GM12878 (cell line): ENCODE measurements at regions of chr5 and their contacts with region 1.

Region 1: GRCh38 chr5:6188344-6188743 is 190.0 kb downstream of the MED10 start:
- DNase-seq: peak; percentile 55
- ATAC-seq: peak; percentile 98
- H3K4me3 ChIP-seq: peak overlapping the region; percentile 37; the same call in 1 of the 2 replicates
- H3K27ac ChIP-seq: peak overlapping the region; percentile 43
- H3K4me1 ChIP-seq: peaks cover 18% of the 10 kb centered on the region
- H3K27me3 ChIP-seq: no peaks in the 10 kb centered on the region
- CTCF ChIP-seq: no peak
- EP300 ChIP-seq: peak; percentile 44 to 69; a peak in 2 of 4 replicates
- POLR2A ChIP-seq: no peak
- RAD21 ChIP-seq: no peak

Region 2: GRCh38 chr5:6069496-6070185 is 118.7 kb before region 1 on chr5:
- CTCF ChIA-PET with region 1: no interaction called
- POLR2A ChIA-PET with region 1: no interaction called
- RAD21 ChIA-PET with region 1: no interaction called
- SMC1A ChIA-PET with region 1: no interaction called
- in situ Hi-C with region 1: no loop called
- intact Hi-C with region 1: no loop called
- DNase-seq: no peak
- ATAC-seq: no peak
- H3K4me3 ChIP-seq: no peak overlapping the region
- H3K27ac ChIP-seq: no peak overlapping the region
- H3K4me1 ChIP-seq: no peaks in the 10 kb centered on the region
- H3K27me3 ChIP-seq: no peaks in the 10 kb centered on the region
- CTCF ChIP-seq: no peak
- EP300 ChIP-seq: no peak
- POLR2A ChIP-seq: no peak
- RAD21 ChIP-seq: no peak

Region 3: DNA sequence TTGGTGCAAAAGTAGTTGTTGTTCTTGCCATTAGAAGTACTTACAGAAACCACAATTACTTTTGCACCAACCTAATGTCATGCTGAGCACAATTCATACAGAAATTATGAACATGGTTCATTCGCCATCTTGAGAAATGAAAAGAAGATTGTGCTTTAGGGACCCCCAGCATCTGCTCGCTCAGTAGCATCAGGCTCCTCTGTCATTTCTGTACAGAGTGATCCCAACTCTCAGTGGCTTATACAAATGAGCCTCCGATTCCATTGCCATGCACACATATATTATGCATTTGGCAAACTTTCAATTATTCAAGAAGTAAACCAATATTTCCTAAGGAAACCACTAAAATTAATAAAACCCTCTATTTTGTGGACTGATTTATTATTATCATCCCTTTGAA is 76.2 kb before region 1 on chr5:
- CTCF ChIA-PET with region 1: interaction called, 3 read pairs
- POLR2A ChIA-PET with region 1: no interaction called
- RAD21 ChIA-PET with region 1: interaction called, 3 read pairs
- SMC1A ChIA-PET with region 1: interaction called, 3 read pairs
- in situ Hi-C with region 1: no loop called
- intact Hi-C with region 1: loop called (anchors 5 kb)
- DNase-seq: no peak
- ATAC-seq: no peak
- H3K4me3 ChIP-seq: no peak overlapping the region
- H3K27ac ChIP-seq: no peak overlapping the region
- H3K4me1 ChIP-seq: no peaks in the 10 kb centered on the region
- H3K27me3 ChIP-seq: no peaks in the 10 kb centered on the region
- CTCF ChIP-seq: no peak
- EP300 ChIP-seq: no peak
- POLR2A ChIP-seq: no peak
- RAD21 ChIP-seq: no peak

Region 4: GRCh38 chr5:6176102-6176693 is 12.1 kb before region 1 on chr5:
- CTCF ChIA-PET with region 1: interaction called, 10 read pairs
- POLR2A ChIA-PET with region 1: no interaction called
- RAD21 ChIA-PET with region 1: interaction called, 3 read pairs
- SMC1A ChIA-PET with region 1: interaction called, 11 read pairs
- in situ Hi-C with region 1: no loop called
- intact Hi-C with region 1: no loop called
- DNase-seq: no peak
- ATAC-seq: peak; percentile 70
- H3K4me3 ChIP-seq: no peak overlapping the region
- H3K27ac ChIP-seq: no peak overlapping the region
- H3K4me1 ChIP-seq: no peaks in the 10 kb centered on the region
- H3K27me3 ChIP-seq: no peaks in the 10 kb centered on the region
- CTCF ChIP-seq: no peak
- EP300 ChIP-seq: no peak
- POLR2A ChIP-seq: no peak
- RAD21 ChIP-seq: no peak

Region 5: DNA sequence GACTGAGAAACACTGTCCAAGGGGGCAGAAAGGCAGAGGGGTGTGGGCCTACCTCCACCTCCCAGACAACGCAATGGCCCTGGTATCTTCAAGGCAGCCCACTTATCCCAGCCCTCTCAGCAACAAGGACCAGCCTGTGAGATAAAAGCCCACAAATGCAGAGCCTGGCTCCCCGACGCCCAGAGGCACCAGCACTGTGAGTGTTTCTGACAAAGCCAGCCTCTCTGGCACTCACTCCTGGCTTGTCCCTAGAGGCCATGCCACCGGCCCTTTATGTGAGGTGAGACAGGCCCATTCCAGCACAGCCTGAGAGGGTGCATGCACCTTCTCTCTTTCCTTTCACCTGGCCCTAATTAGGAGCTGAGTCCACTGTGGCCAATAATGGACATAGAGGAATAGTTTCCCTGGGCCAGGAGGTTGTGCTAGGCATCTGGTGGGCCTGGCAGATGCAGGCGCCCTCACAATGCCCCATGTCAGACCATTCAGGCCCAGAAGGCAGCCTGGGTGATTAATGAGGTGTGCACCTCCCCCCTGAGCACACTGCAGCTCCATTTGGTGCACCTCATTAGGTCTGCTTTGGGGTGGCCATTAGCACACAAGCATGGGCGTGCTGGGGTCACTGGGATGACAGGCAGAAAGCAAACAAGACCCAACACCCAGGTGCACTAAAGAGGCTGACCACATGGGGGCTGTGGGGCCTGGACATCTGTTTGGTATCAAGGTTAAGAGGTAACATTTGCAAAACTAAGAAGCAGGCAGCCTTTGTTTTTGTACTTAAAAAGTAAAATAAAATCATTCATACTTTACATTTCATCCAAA is 14.0 kb after region 1 on chr5:
- CTCF ChIA-PET with region 1: interaction called, 4 read pairs
- POLR2A ChIA-PET with region 1: interaction called, 3 read pairs
- RAD21 ChIA-PET with region 1: interaction called, 10 read pairs
- SMC1A ChIA-PET with region 1: interaction called, 7 read pairs
- in situ Hi-C with region 1: no loop called
- intact Hi-C with region 1: no loop called
- DNase-seq: no peak
- ATAC-seq: peak; percentile 82
- H3K4me3 ChIP-seq: no peak overlapping the region
- H3K27ac ChIP-seq: no peak overlapping the region
- H3K4me1 ChIP-seq: peaks cover 4% of the 10 kb centered on the region
- H3K27me3 ChIP-seq: no peaks in the 10 kb centered on the region
- CTCF ChIP-seq: peak in 2 of 3 experiments; percentile 12 to 40; a peak in 3 of 6 replicates
- EP300 ChIP-seq: no peak
- POLR2A ChIP-seq: no peak
- RAD21 ChIP-seq: peak; percentile 32; the same call in 1 of the 2 replicates

Region 6: GRCh38 chr5:6266671-6267214 is 78.4 kb after region 1 on chr5:
- CTCF ChIA-PET with region 1: no interaction called
- POLR2A ChIA-PET with region 1: interaction called, 3 read pairs
- RAD21 ChIA-PET with region 1: interaction called, 7 read pairs
- SMC1A ChIA-PET with region 1: interaction called, 19 read pairs
- in situ Hi-C with region 1: no loop called
- intact Hi-C with region 1: no loop called
- DNase-seq: no peak
- ATAC-seq: peak; percentile 43; the same call in 2 of the 3 replicates
- H3K4me3 ChIP-seq: no peak overlapping the region
- H3K27ac ChIP-seq: no peak overlapping the region
- H3K4me1 ChIP-seq: no peaks in the 10 kb centered on the region
- H3K27me3 ChIP-seq: no peaks in the 10 kb centered on the region
- CTCF ChIP-seq: no peak
- EP300 ChIP-seq: no peak
- POLR2A ChIP-seq: no peak
- RAD21 ChIP-seq: no peak

Region 7: GRCh38 chr5:6273090-6273735 is 84.9 kb after region 1 on chr5:
- CTCF ChIA-PET with region 1: interaction called, 5 read pairs
- POLR2A ChIA-PET with region 1: interaction called, 4 read pairs
- RAD21 ChIA-PET with region 1: interaction called, 16 read pairs
- SMC1A ChIA-PET with region 1: interaction called, 19 read pairs
- in situ Hi-C with region 1: no loop called
- intact Hi-C with region 1: no loop called
- DNase-seq: peak; percentile 65
- ATAC-seq: peak; percentile 76
- H3K4me3 ChIP-seq: no peak overlapping the region
- H3K27ac ChIP-seq: peak overlapping the region; percentile 38
- H3K4me1 ChIP-seq: peaks cover 24% of the 10 kb centered on the region
- H3K27me3 ChIP-seq: no peaks in the 10 kb centered on the region
- CTCF ChIP-seq: no peak
- EP300 ChIP-seq: peak in 1 of 2 experiments; percentile 46; a peak in 1 of 4 replicates
- POLR2A ChIP-seq: no peak
- RAD21 ChIP-seq: no peak

Region 8: GRCh38 chr5:6728011-6728794 is 539.9 kb after region 1 on chr5:
- CTCF ChIA-PET with region 1: no interaction called
- POLR2A ChIA-PET with region 1: no interaction called
- RAD21 ChIA-PET with region 1: no interaction called
- SMC1A ChIA-PET with region 1: no interaction called
- in situ Hi-C with region 1: loop called (anchors 10 kb)
- intact Hi-C with region 1: no loop called
- DNase-seq: no peak
- ATAC-seq: peak; percentile 89
- H3K4me3 ChIP-seq: peak overlapping the region; percentile 31
- H3K27ac ChIP-seq: peak overlapping the region; percentile 84
- H3K4me1 ChIP-seq: peaks cover 64% of the 10 kb centered on the region
- H3K27me3 ChIP-seq: no peaks in the 10 kb centered on the region
- CTCF ChIP-seq: no peak
- EP300 ChIP-seq: peak; percentile 64 to 91
- POLR2A ChIP-seq: 0 out of 2 replicates have a peak, but pooled peaks have one; percentile 15
- RAD21 ChIP-seq: no peak